Mammary epithelial cell (primary cell): ENCODE measurements at regions of chr20 and their contacts with region 1.

Region 1: GRCh38 chr20:23622839-23623343 is 14.9 kb downstream of the CST3 start:
- DNase-seq: peak; percentile 96
- H3K4me3 ChIP-seq: peak overlapping the region; percentile 27 to 42 (median 39)
- H3K27ac ChIP-seq: peak overlapping the region; percentile 99
- H3K4me1 ChIP-seq: peaks cover 32% of the 10 kb centered on the region
- H3K27me3 ChIP-seq: no peaks in the 10 kb centered on the region
- CTCF ChIP-seq: no peak

Region 2: GRCh38 chr20:23551383-23551782 is 71.5 kb before region 1 on chr20:
- CTCF ChIA-PET with region 1: no interaction called
- dilution Hi-C with region 1: no loop called
- in situ Hi-C with region 1: no loop called
- intact Hi-C with region 1: no loop called
- DNase-seq: no peak
- H3K4me3 ChIP-seq: no peak overlapping the region
- H3K27ac ChIP-seq: no peak overlapping the region
- H3K4me1 ChIP-seq: peaks cover 8% of the 10 kb centered on the region
- H3K27me3 ChIP-seq: no peaks in the 10 kb centered on the region
- CTCF ChIP-seq: no peak

Region 3: GRCh38 chr20:23637282-23638221 is 14.7 kb after region 1 on chr20 and contains the start of gene CST3:
- CTCF ChIA-PET with region 1: no interaction called
- dilution Hi-C with region 1: no loop called
- in situ Hi-C with region 1: no loop called
- intact Hi-C with region 1: loop called (anchors 2 kb)
- DNase-seq: peak; percentile 82
- H3K4me3 ChIP-seq: peak within 1 kb of the TSS; percentile 77 to 78 (median 78)
- H3K27ac ChIP-seq: peak within 1 kb of the TSS; percentile 81
- H3K4me1 ChIP-seq: peaks cover 38% of the 10 kb centered on the region
- H3K27me3 ChIP-seq: no peaks in the 10 kb centered on the region
- CTCF ChIP-seq: no peak
- total RNA-seq, gene CST3: 158 to 380 TPM

Region 4: GRCh38 chr20:23679133-23680092 is 56.5 kb after region 1 on chr20:
- CTCF ChIA-PET with region 1: no interaction called
- dilution Hi-C with region 1: no loop called
- in situ Hi-C with region 1: no loop called
- intact Hi-C with region 1: no loop called
- DNase-seq: peak; percentile 14
- H3K4me3 ChIP-seq: no peak overlapping the region
- H3K27ac ChIP-seq: no peak overlapping the region
- H3K4me1 ChIP-seq: peaks cover 5% of the 10 kb centered on the region
- H3K27me3 ChIP-seq: peaks cover 2% of the 10 kb centered on the region
- CTCF ChIP-seq: no peak

Region 5: DNA sequence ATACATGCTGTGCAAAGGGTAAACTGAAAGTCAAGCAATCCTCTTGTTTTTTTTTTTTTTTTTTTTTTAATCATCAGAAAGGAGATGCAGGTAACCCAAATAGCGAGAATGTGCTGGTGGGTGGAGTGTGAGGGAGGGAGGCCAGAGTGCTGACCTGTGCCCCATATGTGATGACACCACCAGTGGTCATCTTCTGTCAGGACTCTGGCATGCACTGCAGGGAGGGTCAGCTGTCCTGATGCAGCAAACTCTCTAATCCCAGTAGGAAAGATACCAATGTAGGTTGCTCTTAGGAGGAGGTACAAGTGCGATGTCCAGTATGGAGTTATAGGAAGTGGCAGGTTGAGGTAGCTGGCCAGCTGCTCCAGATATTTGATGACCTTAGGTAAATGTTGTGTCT is 68.8 kb after region 1 on chr20:
- CTCF ChIA-PET with region 1: no interaction called
- dilution Hi-C with region 1: no loop called
- in situ Hi-C with region 1: no loop called
- intact Hi-C with region 1: no loop called
- DNase-seq: no peak
- H3K4me3 ChIP-seq: no peak overlapping the region
- H3K27ac ChIP-seq: no peak overlapping the region
- H3K4me1 ChIP-seq: no peaks in the 10 kb centered on the region
- H3K27me3 ChIP-seq: no peaks in the 10 kb centered on the region
- CTCF ChIP-seq: no peak